ENCODE measurements at regions of chr1 and their contacts with region 1.

Region 1: GRCh38 chr1:84573967-84574842 is at the start of gene CTBS:
- DNase-seq: peak; percentile 76
- H3K4me3 Mint-ChIP-seq: peak within 1 kb of the TSS; percentile 98
- H3K27ac Mint-ChIP-seq: peak within 1 kb of the TSS; percentile 100
- H3K4me1 Mint-ChIP-seq: peaks cover 48% of the 10 kb centered on the region
- H3K27me3 Mint-ChIP-seq: peaks cover 2% of the 10 kb centered on the region
- total RNA-seq, gene CTBS: 14.2 and 14.5 TPM in 2 replicates

Region 2: GRCh38 chr1:84077476-84078107 is 496.6 kb before region 1 on chr1:
- intact Hi-C with region 1: loop called (anchors 5 kb)
- DNase-seq: peak; percentile 63
- H3K4me3 Mint-ChIP-seq: peak overlapping the region; percentile 87
- H3K27ac Mint-ChIP-seq: peak overlapping the region; percentile 71
- H3K4me1 Mint-ChIP-seq: peaks cover 17% of the 10 kb centered on the region
- H3K27me3 Mint-ChIP-seq: peaks cover 23% of the 10 kb centered on the region

Region 3: GRCh38 chr1:84442256-84442655 is 131.9 kb before region 1 on chr1:
- intact Hi-C with region 1: loop called (anchors 1 kb)
- DNase-seq: peak; percentile 13
- H3K4me3 Mint-ChIP-seq: no peak overlapping the region
- H3K27ac Mint-ChIP-seq: peak overlapping the region; percentile 73
- H3K4me1 Mint-ChIP-seq: peaks cover 23% of the 10 kb centered on the region
- H3K27me3 Mint-ChIP-seq: peaks cover 8% of the 10 kb centered on the region

Region 4: GRCh38 chr1:84541679-84542078 is 32.5 kb before region 1 on chr1:
- intact Hi-C with region 1: loop called (anchors 2 kb)
- DNase-seq: no peak
- H3K4me3 Mint-ChIP-seq: no peak overlapping the region
- H3K27ac Mint-ChIP-seq: no peak overlapping the region
- H3K4me1 Mint-ChIP-seq: peaks cover 35% of the 10 kb centered on the region
- H3K27me3 Mint-ChIP-seq: no peaks in the 10 kb centered on the region

Region 5: DNA sequence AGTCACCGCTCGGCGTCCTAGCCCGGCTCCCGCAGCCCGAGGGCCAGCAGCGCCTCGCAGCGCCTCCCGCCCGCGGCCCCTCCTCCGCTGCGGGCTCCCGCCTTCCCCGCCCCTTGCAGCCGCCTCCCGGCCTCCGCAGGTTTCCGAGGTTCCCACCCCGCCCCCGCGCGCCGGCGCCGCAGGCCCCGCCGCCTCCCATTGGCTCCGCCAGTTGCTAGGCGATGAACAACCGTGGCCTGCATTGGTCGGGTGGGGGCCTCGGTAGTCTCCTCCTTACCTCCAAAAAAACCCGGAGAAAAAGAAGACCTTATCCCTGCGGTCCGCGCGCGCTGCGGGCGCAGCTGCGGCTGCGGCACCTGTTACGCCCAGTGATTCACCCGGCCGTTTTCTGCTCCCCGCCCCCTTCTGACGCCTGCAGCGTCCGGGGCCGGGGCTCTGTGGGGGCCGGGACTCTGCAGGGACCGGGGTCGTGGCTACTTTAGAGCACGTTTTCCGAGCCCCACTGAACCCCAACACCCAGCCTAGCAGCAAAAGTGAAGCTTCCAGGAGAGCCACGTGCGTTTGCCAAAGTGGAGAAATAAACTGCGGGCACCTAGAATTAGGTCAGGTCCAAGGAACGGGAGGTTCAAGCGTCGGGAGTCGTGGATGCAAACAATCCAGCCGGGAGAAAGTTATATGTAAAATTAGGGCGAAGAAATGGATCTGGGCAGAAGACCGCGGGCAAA is 116.4 kb after region 1 on chr1 and contains the start of gene SSX2IP:
- intact Hi-C with region 1: loop called (anchors 1 kb)
- DNase-seq: peak; percentile 98
- H3K4me3 Mint-ChIP-seq: peak within 1 kb of the TSS; percentile 94
- H3K27ac Mint-ChIP-seq: peak within 1 kb of the TSS; percentile 95
- H3K4me1 Mint-ChIP-seq: peaks cover 59% of the 10 kb centered on the region
- H3K27me3 Mint-ChIP-seq: no peaks in the 10 kb centered on the region
- total RNA-seq, gene SSX2IP: 11.1 and 15.0 TPM in 2 replicates

Region 6: GRCh38 chr1:84959294-84959693 is 385.1 kb after region 1 on chr1:
- intact Hi-C with region 1: loop called (anchors 5 kb)
- DNase-seq: peak; percentile 41
- H3K4me3 Mint-ChIP-seq: peak overlapping the region; percentile 27
- H3K27ac Mint-ChIP-seq: peak overlapping the region; percentile 59
- H3K4me1 Mint-ChIP-seq: peaks cover 24% of the 10 kb centered on the region
- H3K27me3 Mint-ChIP-seq: no peaks in the 10 kb centered on the region

Measured in activated T-helper 1 cell treated with anti-CD3 and anti-CD28 coated beads, Interleukin-12 subunit alpha, Interleukin-12 subunit beta, Interleukin-2, Interleukin-4 antibody, amounts not matched to agents 30 ng/mL and 10 ng/mL and 1 ng/mL, durations not matched to agents 14 hours and 24 hours and 36 hours (primary cell).